Sciatic nerve (tissue), 2 donors: ENCODE measurements at regions of chr10 and their contacts with region 1.

Region 1: GRCh38 chr10:102352066-102352715 is 43.3 kb upstream of the NFKB2 start:
- DNase-seq: peak; percentile 78
- ATAC-seq: peak; percentile 72

Region 2: GRCh38 chr10:102229810-102230263 is 122.4 kb before region 1 on chr10:
- intact Hi-C with region 1: loop called (anchors 5 kb)
- DNase-seq: peak; percentile 91
- ATAC-seq: peak; percentile 64